HEK293T (cell line): ENCODE measurements at regions of chr2 and their contacts with region 1.

Region 1: GRCh38 chr2:74529357-74530238 is at the starts of genes AUP1 and HTRA2:
- DNase-seq: peak; percentile 96

Region 2: GRCh38 chr2:74464406-74464928 is 65.1 kb before region 1 on chr2:
- CTCF ChIA-PET with region 1: no interaction called
- POLR2A ChIA-PET with region 1: no interaction called
- DNase-seq: no peak

Region 3: DNA sequence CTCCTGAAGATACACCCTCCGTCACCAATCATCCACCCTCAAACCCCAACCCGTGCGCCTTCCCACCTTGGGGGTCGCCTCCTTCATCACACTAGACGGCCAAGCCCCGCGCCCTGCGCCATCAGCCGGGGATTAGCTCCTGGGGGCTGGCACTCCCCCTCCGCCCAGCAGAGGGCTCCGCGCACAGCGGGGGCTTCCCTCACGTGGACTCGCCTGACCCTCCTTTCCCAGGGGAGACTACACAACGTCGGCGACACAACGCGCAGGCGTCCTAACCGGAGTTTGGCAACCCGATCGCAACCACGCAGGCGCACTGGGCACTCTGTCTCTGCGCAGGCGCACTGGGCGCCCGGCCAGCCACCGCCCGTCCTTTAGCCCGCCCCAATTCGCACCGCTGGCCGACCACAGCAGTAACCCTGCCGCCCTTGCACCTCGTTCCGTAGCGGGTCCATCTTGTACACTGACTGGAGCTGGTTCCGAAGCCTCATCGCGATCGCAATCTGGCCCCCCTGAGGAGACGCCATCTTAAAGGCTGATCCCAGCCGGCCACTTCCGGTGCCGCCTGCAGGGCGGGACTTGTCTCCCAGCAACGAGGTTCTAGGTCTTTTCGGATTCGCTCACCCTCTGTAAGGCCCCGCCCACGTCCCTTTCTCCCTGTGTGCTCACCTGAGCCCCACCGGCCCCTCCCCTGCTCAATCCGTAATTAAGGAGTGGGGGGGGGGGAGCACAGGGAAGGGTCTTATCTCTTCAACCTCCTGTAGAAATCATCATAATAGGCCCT is 22.3 kb before region 1 on chr2 and contains the start of gene PCGF1:
- CTCF ChIA-PET with region 1: interaction called, 3 read pairs
- POLR2A ChIA-PET with region 1: interaction called, 70 read pairs
- DNase-seq: peak; percentile 97

Region 4: GRCh38 chr2:74587664-74588277 is 58.2 kb after region 1 on chr2:
- CTCF ChIA-PET with region 1: interaction called, 4 read pairs
- POLR2A ChIA-PET with region 1: interaction called, 10 read pairs
- DNase-seq: peak; percentile 75